Kidney (tissue), 22 donors: ENCODE measurements at regions of chr14 and their contacts with region 1.

Region 1: GRCh38 chr14:89258728-89259273 is 158.2 kb downstream of the FOXN3 start:
- DNase-seq: peak in 1 of 5 donors; percentile 7
- H3K4me3 ChIP-seq: no peak overlapping the region
- H3K27ac ChIP-seq: no peak overlapping the region
- H3K4me1 ChIP-seq: peaks cover 0 to 5% (median 0%) of the 10 kb centered on the region in 3 donors
- H3K27me3 ChIP-seq: no peaks in the 10 kb centered on the region
- CTCF ChIP-seq: no peak

Region 2: DNA sequence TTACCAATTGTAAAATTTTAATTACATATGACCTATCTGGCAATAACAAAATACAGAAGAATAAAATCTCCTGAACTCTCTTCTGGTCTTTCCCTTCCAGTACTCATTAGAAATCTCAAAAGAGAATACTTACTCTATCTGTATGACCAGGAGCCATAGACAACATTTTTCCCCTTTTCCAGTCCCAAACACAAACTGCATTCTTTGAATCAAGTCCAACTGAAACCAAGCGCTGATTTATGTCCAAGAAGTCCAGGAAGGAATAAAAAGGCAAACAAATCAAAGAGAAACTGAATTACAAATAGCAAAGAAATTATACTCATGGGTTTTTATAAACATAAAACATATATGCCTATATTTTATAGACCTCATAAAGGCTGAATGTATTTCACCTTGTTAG is 512.7 kb before region 1 on chr14:
- intact Hi-C with region 1: loop called (anchors 5 kb)
- DNase-seq: peak in 2 of 5 donors; percentile 48 to 66
- H3K4me3 ChIP-seq: no peak overlapping the region
- H3K27ac ChIP-seq: no peak overlapping the region
- H3K4me1 ChIP-seq: no peaks in the 10 kb centered on the region
- H3K27me3 ChIP-seq: no peaks in the 10 kb centered on the region
- CTCF ChIP-seq: no peak